ENCODE measurements at regions of chr12 and their contacts with region 1.

Region 1: GRCh38 chr12:1812650-1813302 is 7.6 kb upstream of the LRTM2 start:
- DNase-seq: no peak
- H3K4me3 ChIP-seq: no peak overlapping the region
- H3K27ac ChIP-seq: no peak overlapping the region
- H3K4me1 ChIP-seq: no peaks in the 10 kb centered on the region
- H3K27me3 ChIP-seq: no peaks in the 10 kb centered on the region
- CTCF ChIP-seq: no peak

Region 2: DNA sequence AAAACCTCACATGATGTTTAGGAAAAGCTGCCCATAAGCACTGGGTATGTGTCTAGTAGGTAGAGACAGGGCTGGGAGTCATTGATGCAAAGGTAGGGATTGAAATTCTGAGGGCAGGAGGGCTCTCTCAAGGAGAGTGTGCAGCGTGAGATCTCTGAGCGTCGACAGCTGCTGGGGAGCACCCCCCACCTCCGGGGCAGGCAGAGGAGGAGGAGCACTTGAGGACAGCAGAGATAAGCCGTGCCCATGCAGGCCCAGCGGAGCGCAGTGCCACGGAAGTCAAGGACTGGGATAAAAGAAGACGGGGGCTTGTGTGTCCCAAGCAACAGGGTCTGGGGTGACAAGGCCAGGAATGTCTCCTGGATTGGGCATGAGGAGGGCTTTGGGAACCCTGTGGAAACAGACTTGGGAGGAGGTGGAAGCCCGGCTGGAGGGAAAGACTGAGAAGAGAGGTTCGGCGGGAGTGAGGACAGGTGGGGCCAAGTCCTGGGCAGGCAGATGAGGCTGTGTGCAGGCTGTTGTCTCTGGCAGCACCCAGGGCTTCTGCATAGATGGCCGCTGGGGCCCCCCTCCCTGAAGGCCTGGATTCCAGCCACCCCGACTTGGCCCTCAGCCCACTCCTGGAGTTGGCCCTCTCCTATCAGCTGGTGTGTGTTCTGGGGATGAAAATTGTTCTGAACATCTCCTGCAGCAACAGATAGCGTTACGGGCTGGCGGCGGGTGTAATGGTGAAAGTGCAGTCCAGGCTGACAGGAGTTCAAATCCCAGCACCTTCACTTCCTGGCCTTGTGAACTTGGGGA is 103.8 kb after region 1 on chr12:
- intact Hi-C with region 1: loop called (anchors 10 kb)
- DNase-seq: peak in 1 of 2 donors; percentile 64
- H3K4me3 ChIP-seq: no peak overlapping the region
- H3K27ac ChIP-seq: no peak overlapping the region
- H3K4me1 ChIP-seq: peaks cover 0 to 15% (median 5%) of the 10 kb centered on the region in 4 donors
- H3K27me3 ChIP-seq: no peaks in the 10 kb centered on the region
- CTCF ChIP-seq: no peak